Left ventricle myocardium inferior (tissue), 1 donor: ENCODE measurements at regions of chr14 and their contacts with region 1.

Region 1: GRCh38 chr14:73472185-73473114 is 14.1 kb upstream of the NUMB start:
- DNase-seq: no peak
- H3K4me3 ChIP-seq: no peak overlapping the region
- H3K27ac ChIP-seq: no peak overlapping the region
- H3K4me1 ChIP-seq: no peaks in the 10 kb centered on the region
- H3K27me3 ChIP-seq: no peaks in the 10 kb centered on the region
- CTCF ChIP-seq: peak; percentile 81

Region 2: DNA sequence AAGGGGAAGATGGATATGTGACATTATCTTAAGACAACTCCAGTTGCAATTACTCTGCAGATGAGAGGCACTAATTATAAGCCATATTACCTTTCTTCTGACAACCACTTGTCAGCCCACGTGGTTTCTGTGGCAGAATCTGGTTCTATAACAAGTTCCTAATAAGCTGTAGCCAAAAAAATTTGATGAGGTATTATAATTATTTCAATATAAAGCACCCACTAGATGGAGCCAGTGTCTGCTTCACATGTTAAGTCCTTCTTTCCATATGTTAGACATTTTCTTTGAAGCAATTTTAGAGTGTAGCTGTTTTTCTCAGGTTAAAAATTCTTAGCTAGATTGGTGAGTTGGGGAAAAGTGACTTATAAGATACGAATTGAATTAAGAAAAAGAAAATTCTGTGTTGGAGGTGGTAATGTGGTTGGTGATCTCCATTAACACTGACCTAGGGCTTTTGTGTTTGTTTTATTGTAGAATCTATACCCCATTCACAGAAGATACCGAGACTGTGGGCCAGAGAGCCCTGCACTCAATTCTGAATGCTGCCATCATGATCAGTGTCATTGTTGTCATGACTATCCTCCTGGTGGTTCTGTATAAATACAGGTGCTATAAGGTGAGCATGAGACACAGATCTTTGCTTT is 299.2 kb before region 1 on chr14:
- intact Hi-C with region 1: loop called (anchors 10 kb)
- DNase-seq: no peak
- H3K4me3 ChIP-seq: no peak overlapping the region
- H3K27ac ChIP-seq: no peak overlapping the region
- H3K4me1 ChIP-seq: no peaks in the 10 kb centered on the region
- H3K27me3 ChIP-seq: no peaks in the 10 kb centered on the region
- CTCF ChIP-seq: peak; percentile 56

Region 3: DNA sequence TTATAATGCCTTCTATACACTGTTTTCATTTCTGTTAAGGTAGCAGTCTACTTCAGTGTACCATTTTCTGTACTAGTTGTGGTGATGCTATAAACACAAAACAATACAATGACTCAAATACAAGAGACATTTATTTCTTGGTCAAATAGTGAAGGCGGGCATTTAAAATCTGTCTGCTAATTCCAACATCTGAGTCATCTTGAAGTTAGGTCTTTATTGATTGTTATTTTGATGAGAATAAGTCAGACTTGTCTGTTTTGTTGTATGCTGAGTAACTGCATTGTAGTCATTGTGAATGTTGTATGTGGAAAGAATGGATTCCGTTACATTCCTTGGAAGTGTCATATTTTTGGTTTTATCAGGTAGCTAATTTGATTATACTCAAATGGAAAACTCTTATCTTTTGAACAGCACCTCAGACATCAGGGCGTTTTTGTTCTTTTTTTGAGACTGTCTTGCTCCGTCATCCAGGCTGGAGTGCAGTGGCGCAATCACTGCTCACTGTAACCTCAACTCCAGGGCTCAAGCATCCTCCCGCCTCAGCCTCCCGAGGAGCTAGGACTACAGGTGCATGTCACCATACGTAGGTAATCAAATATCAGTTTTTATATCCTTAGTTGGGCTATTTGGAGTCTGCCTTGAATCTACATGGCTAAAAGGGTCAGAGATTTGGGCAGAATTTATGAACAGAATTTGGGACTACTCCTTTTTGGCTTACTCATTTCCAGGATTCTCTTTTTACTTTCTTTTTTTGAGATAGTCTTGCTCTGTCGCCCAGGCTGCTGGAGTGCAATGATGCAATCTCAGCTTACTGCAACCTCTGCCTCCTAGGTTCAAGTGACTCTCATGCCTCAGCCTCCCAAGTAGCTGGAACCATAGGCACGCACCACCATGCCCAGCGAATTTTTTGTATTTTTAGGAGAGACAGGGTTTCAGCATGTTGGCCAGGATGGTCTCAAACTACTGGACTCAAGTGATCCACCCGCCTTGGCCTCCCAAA is 178.4 kb before region 1 on chr14:
- intact Hi-C with region 1: loop called (anchors 2 kb)
- DNase-seq: no peak
- H3K4me3 ChIP-seq: no peak overlapping the region
- H3K27ac ChIP-seq: no peak overlapping the region
- H3K4me1 ChIP-seq: peaks cover 4% of the 10 kb centered on the region
- H3K27me3 ChIP-seq: no peaks in the 10 kb centered on the region
- CTCF ChIP-seq: no peak